ENCODE measurements at regions of chr3 and their contacts with region 1.

Region 1: DNA sequence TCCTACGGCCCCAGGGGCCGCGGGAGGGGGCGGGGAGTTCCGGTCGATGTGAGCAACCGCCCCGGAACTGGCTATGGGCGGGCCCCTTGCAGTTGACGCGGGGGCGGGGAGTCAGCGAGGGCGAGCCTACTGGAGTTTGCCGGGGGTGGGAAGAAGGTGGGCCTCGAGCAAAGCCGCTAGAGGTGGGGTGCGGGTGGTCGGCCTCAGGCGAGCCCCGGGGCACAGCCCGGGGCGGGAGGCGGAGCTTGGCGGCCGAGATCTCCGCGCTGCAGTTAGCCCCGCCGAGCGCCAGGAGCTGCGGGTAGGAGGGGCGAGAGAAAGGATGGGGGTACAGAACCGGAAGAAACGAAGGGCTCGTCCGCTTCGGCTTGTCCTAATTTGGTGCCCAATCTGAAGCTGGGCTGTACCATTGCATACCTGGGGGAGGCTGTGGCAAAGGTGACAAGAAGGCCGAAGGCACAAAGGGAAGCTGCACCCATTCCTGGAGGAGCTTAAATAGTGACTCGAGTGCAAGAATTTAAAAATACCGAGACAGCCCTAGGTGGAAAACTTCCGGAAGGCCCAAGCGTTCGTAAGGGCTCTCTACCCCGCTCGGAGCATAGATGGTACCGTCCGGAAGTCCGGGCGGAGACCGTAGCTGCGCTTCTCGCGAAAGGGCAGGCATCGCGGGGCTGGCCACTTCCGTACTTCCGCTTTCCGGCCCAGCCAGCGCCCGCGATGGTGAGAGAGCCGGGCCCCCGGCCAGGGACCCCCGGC is at the starts of genes ARPC4 and TADA3:
- DNase-seq: peak; percentile 82 to 93 (median 88)
- H3K4me3 ChIP-seq: peak within 1 kb of the TSS; percentile 62 to 100 (median 96)
- H3K27ac ChIP-seq: peak within 1 kb of the TSS; percentile 85 to 100 (median 98)
- H3K27me3 ChIP-seq: no peaks in the 10 kb centered on the region
- CTCF ChIP-seq: peak in 27 of 56 donors; percentile 8 to 44 (median 24)
- total RNA-seq, gene ARPC4: 82.2 to 149 (median 112) TPM
- total RNA-seq, gene TADA3: 38.3 to 82.0 (median 54.2) TPM

Region 2: DNA sequence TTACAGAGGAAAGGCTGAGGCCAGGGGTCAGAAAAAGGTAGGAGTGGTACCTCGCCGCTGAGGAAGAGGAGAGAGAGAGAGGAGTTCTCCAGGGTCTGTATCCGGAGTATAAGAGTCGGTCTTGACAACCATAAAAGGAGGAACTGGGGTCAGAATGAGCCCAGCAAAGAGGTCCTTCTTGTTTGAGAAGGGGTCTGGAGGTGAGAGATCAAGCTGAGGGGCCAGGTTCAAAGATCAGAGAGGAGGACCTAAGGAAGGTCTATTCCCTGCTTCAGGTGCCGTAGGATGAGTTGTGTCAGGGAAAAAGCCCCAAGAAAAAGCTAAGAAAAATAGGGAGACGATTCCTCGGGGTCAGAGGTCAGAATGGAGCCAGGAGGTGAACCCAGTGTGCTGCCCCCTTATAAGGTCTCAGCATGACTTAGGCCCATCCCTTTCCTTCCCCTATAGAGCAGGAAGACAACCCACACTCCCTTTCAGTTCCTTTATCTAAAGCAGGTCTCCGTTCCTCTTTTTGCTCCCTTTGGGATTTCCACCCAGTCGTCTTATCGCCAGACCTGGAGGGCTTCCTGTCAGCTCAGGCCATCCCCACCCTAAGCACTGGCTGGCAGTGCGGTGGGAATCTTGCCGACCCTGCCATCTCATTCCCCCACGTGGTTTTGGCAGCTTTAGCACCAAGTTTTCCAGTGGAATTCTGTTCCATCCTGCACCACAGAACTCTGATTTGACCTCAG is 142.6 kb before region 1 on chr3:
- intact Hi-C with region 1: no loop called
- DNase-seq: no peak
- H3K4me3 ChIP-seq: peak overlapping the region; percentile 67 to 100 (median 99)
- H3K27ac ChIP-seq: peak overlapping the region in 57 of 59 donors; percentile 41 to 95 (median 83)
- H3K27me3 ChIP-seq: no peaks in the 10 kb centered on the region
- CTCF ChIP-seq: no peak

Region 3: GRCh38 chr3:9731206-9732079 is 61.1 kb before region 1 on chr3 and contains the start of gene BRPF1:
- intact Hi-C with region 1: loop called (anchors 5 kb)
- DNase-seq: peak; percentile 98 to 100 (median 99)
- H3K4me3 ChIP-seq: peak within 1 kb of the TSS; percentile 70 to 100 (median 97)
- H3K27ac ChIP-seq: peak within 1 kb of the TSS; percentile 74 to 99 (median 97)
- H3K27me3 ChIP-seq: no peaks in the 10 kb centered on the region
- CTCF ChIP-seq: peak in 37 of 56 donors; percentile 10 to 64 (median 30)
- total RNA-seq, gene BRPF1: 10.7 to 25.9 (median 16.3) TPM

Region 4: DNA sequence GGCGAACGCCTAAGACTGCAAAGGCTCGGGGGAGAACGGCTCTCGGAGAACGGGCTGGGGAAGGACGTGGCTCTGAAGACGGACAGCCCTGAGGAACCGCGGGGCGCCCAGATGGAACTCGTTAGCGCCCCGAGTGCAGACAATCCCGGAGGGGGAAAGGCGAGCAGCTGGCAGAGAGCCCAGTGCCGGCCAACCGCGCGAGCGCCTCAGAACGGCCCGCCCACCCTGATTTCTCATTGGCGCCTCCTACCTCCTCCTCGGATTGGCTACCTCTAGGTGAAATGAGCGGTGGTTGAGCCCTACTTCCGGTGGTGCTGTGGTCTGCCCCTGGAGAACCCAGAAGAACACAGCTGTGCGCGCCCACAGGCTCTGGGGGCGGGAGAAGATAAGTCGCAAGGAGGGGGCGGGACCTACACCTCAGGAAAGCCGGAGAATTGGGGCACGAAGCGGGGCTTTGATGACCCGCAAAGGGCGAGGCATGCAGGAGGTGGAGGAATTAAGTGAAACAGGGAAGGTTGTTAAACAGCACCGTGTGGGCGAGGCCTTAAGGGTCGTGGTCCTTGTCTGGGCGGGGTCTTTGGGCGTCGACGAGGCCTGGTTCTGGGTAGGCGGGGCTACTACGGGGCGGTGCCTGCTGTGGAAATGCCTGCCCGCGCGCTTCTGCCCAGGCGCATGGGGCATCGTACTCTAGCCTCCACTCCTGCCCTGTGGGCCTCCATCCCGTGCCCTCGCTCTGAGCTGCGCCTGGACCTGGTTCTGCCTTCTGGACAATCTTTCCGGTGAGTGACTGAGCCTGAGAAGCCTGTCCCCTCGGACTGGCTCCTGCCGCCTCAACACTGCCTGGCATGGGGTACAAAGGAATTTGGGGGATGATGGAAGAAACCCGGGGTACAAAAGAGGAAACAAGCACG is 42.7 kb before region 1 on chr3 and contains the start of gene OGG1:
- intact Hi-C with region 1: loop called (anchors 1 to 2 kb)
- DNase-seq: peak; percentile 95 to 98 (median 97)
- H3K4me3 ChIP-seq: peak within 1 kb of the TSS; percentile 56 to 94 (median 80)
- H3K27ac ChIP-seq: peak within 1 kb of the TSS; percentile 76 to 96 (median 92)
- H3K27me3 ChIP-seq: no peaks in the 10 kb centered on the region
- CTCF ChIP-seq: peak in 52 of 56 donors; percentile 26 to 71 (median 48)
- total RNA-seq, gene OGG1: 18.6 to 54.6 (median 30.3) TPM

Region 5: GRCh38 chr3:9779721-9780457 is 12.7 kb before region 1 on chr3:
- intact Hi-C with region 1: no loop called
- DNase-seq: no peak
- H3K4me3 ChIP-seq: no peak overlapping the region
- H3K27ac ChIP-seq: peak overlapping the region in 48 of 59 donors; percentile 3 to 79 (median 60)
- H3K27me3 ChIP-seq: no peaks in the 10 kb centered on the region
- CTCF ChIP-seq: no peak

Region 6: GRCh38 chr3:9932843-9933560 is 140.4 kb after region 1 on chr3:
- intact Hi-C with region 1: loop called in 1 of 2 experiments (anchors 5 kb)
- DNase-seq: peak; percentile 55 to 88 (median 77)
- H3K4me3 ChIP-seq: peak overlapping the region; percentile 55 to 97 (median 87)
- H3K27ac ChIP-seq: peak overlapping the region; percentile 77 to 98 (median 93)
- H3K27me3 ChIP-seq: no peaks in the 10 kb centered on the region
- CTCF ChIP-seq: peak; percentile 31 to 83 (median 67)